ENCODE measurements at regions of chr10 and their contacts with region 1.

Region 1: GRCh38 chr10:4849555-4850242 is 23.7 kb downstream of the AKR1E2 start:
- DNase-seq: peak; percentile 87
- ATAC-seq: peak; percentile 92
- H3K4me3 ChIP-seq: no peak overlapping the region
- H3K27ac ChIP-seq: peak overlapping the region; percentile 23
- H3K4me1 ChIP-seq: peaks cover 23% of the 10 kb centered on the region
- H3K27me3 ChIP-seq: no peaks in the 10 kb centered on the region
- CTCF ChIP-seq: peak; percentile 99
- EP300 ChIP-seq: peak in 1 of 2 experiments; percentile 35; a peak in 2 of 4 replicates
- POLR2A ChIP-seq: no peak
- RAD21 ChIP-seq: peak; percentile 99

Region 2: GRCh38 chr10:4981722-4982471 is 132.2 kb after region 1 on chr10:
- CTCF ChIA-PET with region 1: interaction called, 89 read pairs
- POLR2A ChIA-PET with region 1: interaction called, 26 read pairs
- in situ Hi-C with region 1: loop called (anchors 5 kb)
- intact Hi-C with region 1: loop called (anchors 1 kb)
- DNase-seq: peak; percentile 79
- ATAC-seq: peak; percentile 38
- H3K4me3 ChIP-seq: no peak overlapping the region
- H3K27ac ChIP-seq: peak overlapping the region; percentile 52
- H3K4me1 ChIP-seq: peaks cover 15% of the 10 kb centered on the region
- H3K27me3 ChIP-seq: no peaks in the 10 kb centered on the region
- CTCF ChIP-seq: peak; percentile 78
- EP300 ChIP-seq: peak in 1 of 2 experiments; percentile 23; a peak in 1 of 4 replicates
- POLR2A ChIP-seq: peak; percentile 67 to 88
- RAD21 ChIP-seq: peak; percentile 58; the same call in 1 of the 2 replicates

Region 3: DNA sequence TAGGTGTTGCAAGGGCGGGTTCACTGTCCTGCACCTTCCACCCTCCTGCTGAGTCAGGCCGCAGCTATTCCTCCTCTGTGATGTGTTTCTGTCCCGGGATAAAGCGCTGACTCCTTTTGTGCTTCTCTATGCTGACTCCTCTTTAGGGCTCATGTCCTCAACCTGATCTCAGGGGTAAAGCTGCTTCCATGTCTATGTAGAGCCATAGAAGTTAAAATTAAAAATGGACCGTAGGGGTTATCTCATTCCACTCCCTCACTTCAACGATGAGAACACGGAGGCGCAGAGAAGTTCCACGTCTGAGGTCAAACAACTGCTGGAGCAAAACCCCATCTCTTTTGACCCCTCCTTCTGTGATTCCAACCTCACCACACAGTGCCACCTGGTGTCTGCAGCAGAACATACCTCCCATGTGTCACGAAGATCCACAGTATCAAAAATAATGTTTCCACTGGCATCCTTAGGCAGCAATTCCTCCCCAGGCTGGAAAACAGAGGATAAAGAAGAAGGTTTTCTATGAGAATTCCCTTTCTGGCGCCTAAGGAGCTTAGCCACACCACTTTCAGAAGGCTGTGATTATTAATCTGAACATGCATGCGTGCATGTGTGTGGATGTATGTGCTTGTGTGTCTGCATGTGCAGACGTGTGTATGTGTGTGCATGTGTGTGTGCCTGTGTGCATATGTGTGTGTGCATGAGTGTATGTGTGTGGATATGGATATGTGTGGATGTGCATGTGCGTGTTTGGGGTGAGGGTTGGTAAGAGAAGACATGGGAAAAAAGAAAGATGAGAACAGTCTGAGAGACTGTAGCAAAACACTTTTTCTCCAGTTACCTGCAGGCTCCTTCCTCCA is 433.8 kb after region 1 on chr10:
- CTCF ChIA-PET with region 1: interaction called, 21 read pairs
- POLR2A ChIA-PET with region 1: no interaction called
- in situ Hi-C with region 1: no loop called
- intact Hi-C with region 1: loop called (anchors 1 kb)
- DNase-seq: peak; percentile 58
- ATAC-seq: peak; percentile 89
- H3K4me3 ChIP-seq: no peak overlapping the region
- H3K27ac ChIP-seq: no peak overlapping the region
- H3K4me1 ChIP-seq: peaks cover 17% of the 10 kb centered on the region
- H3K27me3 ChIP-seq: no peaks in the 10 kb centered on the region
- CTCF ChIP-seq: peak; percentile 82
- EP300 ChIP-seq: 0 out of 4 replicates have a peak, but pooled peaks of 1 of the 2 experiments have one; percentile 21
- POLR2A ChIP-seq: no peak
- RAD21 ChIP-seq: peak; percentile 86

Region 4: DNA sequence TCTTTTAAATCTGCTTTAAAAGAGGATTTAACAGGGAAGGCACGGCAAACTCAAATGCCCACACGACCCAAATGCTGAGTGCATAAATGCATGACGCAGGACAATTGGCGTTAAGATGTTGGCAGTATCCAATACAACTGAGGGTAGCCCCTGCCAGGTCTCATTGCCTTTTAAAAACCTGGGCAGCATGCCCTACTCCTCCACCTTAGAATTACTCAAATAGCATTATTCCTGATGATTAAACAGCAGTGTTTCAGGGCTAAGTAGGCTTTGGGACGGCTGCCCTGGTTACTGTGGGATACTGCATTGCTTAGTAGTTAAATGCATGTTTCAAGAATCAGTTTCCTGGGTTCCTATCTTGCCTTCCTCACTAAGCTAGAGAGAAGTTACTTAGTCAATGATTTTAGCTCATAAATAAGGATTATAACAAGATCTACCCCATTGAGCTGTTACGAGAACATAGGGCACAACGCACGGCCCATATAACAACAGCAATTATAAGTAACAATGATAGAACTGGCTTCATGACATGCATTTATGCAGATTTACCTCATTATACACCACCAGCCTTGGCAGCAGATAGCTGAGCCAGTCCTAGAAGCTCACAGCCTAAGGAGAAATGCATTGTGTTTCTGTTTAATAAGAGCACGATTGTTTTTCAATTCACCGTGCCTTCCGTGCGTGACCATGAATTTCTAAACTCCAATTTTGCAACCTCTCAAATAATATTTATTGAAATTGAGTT is 547.0 kb after region 1 on chr10:
- CTCF ChIA-PET with region 1: no interaction called
- POLR2A ChIA-PET with region 1: no interaction called
- in situ Hi-C with region 1: loop called (anchors 25 kb)
- intact Hi-C with region 1: no loop called
- DNase-seq: no peak
- ATAC-seq: no peak
- H3K4me3 ChIP-seq: no peak overlapping the region
- H3K27ac ChIP-seq: no peak overlapping the region
- H3K4me1 ChIP-seq: peaks cover 8% of the 10 kb centered on the region; the same call in 1 of the 2 replicates
- H3K27me3 ChIP-seq: peaks cover 5 to 7% of the 10 kb centered on the region in 2 experiments; a peak in 3 of 5 replicates
- CTCF ChIP-seq: no peak
- EP300 ChIP-seq: no peak
- POLR2A ChIP-seq: no peak
- RAD21 ChIP-seq: no peak